ENCODE measurements at regions of chr21 and their contacts with region 1.

Region 1: GRCh38 chr21:44949779-44950198 is 10.0 kb downstream of the SLX9 start:
- DNase-seq: peak; percentile 65
- H3K4me3 Mint-ChIP-seq: no peak overlapping the region
- H3K27ac Mint-ChIP-seq: no peak overlapping the region
- H3K4me1 Mint-ChIP-seq: no peaks in the 10 kb centered on the region
- H3K27me3 Mint-ChIP-seq: no peaks in the 10 kb centered on the region

Region 2: GRCh38 chr21:45050786-45051489 is 101.1 kb after region 1 on chr21:
- intact Hi-C with region 1: no loop called
- DNase-seq: no peak
- H3K4me3 Mint-ChIP-seq: no peak overlapping the region
- H3K27ac Mint-ChIP-seq: no peak overlapping the region
- H3K4me1 Mint-ChIP-seq: no peaks in the 10 kb centered on the region
- H3K27me3 Mint-ChIP-seq: peaks cover 21% of the 10 kb centered on the region

Region 3: GRCh38 chr21:45129189-45129923 is 179.6 kb after region 1 on chr21:
- intact Hi-C with region 1: loop called (anchors 1 kb)
- DNase-seq: no peak
- H3K4me3 Mint-ChIP-seq: no peak overlapping the region
- H3K27ac Mint-ChIP-seq: no peak overlapping the region
- H3K4me1 Mint-ChIP-seq: peaks cover 10% of the 10 kb centered on the region
- H3K27me3 Mint-ChIP-seq: no peaks in the 10 kb centered on the region

Region 4: DNA sequence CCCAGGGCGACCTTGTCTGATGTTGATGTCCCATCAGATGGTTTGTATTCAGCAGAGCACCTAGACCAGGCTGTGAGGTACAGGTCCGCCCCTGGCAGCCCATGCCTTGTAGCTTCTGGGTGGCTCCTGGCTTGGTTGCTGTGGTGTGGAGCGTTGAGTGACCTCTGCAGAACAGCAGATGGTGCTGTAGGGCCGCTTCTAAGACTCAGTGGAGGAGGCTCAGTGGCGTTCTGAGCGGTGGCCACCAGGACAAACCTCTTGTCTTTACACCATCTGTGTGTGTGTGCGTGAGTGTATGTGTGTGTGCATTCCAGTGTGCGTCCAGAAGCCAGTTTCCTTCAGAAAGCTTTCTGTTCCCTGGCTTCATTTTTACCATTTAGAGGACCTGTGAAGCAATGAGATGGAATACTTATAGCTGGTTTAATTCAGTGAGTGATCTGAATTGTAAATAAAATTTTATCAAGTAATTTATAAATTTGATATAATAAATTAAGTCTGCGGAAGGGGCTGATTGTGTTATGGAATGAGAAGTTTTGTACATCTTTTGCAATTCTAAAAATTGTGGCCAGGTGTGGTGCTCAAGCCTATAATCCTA is 190.7 kb after region 1 on chr21:
- intact Hi-C with region 1: loop called (anchors 1 kb)
- DNase-seq: peak; percentile 50
- H3K4me3 Mint-ChIP-seq: no peak overlapping the region
- H3K27ac Mint-ChIP-seq: no peak overlapping the region
- H3K4me1 Mint-ChIP-seq: peaks cover 5% of the 10 kb centered on the region
- H3K27me3 Mint-ChIP-seq: no peaks in the 10 kb centered on the region

Measured in activated T-helper 1 cell treated with anti-CD3 and anti-CD28 coated beads, Interleukin-12 subunit alpha, Interleukin-12 subunit beta, Interleukin-2, Interleukin-4 antibody, amounts not matched to agents 30 ng/mL and 10 ng/mL and 1 ng/mL, durations not matched to agents 14 hours and 24 hours and 36 hours (primary cell).